ENCODE measurements at regions of chr16 and their contacts with region 1.

Region 1: DNA sequence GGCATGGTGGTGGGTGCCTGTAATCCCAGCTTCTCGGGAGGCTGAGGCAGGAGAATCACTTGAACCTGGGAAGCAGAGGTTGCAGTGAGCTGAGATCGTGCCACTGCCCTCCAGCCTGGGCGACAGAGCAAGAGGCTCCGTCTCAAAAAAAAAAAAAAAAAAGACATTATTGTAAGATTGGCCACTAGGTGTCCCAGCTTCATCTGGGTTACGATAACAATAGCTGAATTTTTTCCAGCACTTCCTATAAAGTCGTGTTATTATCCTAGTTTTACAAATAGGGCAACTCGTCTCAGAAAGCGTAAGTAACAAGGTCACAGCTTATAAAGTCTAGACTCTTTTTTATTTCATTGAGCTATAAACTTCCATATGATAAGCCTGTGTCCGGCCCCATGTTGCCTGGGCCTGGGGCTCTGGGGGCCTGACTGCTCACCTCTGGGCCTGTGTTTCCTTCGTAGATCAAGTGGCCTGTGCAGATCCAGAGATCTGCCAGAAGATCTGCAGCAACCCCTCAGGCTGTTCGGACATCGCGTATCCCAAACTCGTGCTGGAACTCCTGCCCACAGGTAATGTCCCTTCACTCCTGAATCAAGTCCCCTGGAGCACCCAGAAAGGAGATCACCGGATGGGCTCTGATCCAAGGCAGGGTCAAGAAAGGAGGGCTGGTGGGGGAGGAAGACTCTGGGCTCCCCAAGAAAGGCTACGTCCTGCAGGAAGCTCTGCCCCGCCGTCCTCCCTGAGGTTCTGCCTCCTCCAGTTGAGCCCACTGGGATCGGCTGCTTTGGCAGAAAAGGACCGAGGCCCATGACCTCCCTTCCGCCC is 60.6 kb downstream of the SLC5A11 start:
- DNase-seq: peak; percentile 48
- H3K4me3 ChIP-seq: no peak overlapping the region
- H3K27ac ChIP-seq: no peak overlapping the region
- H3K4me1 ChIP-seq: no peaks in the 10 kb centered on the region
- H3K27me3 ChIP-seq: no peaks in the 10 kb centered on the region
- CTCF ChIP-seq: peak; percentile 55

Region 2: GRCh38 chr16:24834459-24835335 is 71.7 kb before region 1 on chr16:
- CTCF ChIA-PET with region 1: interaction called, 12 read pairs
- POLR2A ChIA-PET with region 1: no interaction called
- intact Hi-C with region 1: no loop called
- DNase-seq: peak; percentile 54
- H3K4me3 ChIP-seq: no peak overlapping the region
- H3K27ac ChIP-seq: no peak overlapping the region
- H3K4me1 ChIP-seq: no peaks in the 10 kb centered on the region
- H3K27me3 ChIP-seq: no peaks in the 10 kb centered on the region
- CTCF ChIP-seq: peak; percentile 66

Region 3: DNA sequence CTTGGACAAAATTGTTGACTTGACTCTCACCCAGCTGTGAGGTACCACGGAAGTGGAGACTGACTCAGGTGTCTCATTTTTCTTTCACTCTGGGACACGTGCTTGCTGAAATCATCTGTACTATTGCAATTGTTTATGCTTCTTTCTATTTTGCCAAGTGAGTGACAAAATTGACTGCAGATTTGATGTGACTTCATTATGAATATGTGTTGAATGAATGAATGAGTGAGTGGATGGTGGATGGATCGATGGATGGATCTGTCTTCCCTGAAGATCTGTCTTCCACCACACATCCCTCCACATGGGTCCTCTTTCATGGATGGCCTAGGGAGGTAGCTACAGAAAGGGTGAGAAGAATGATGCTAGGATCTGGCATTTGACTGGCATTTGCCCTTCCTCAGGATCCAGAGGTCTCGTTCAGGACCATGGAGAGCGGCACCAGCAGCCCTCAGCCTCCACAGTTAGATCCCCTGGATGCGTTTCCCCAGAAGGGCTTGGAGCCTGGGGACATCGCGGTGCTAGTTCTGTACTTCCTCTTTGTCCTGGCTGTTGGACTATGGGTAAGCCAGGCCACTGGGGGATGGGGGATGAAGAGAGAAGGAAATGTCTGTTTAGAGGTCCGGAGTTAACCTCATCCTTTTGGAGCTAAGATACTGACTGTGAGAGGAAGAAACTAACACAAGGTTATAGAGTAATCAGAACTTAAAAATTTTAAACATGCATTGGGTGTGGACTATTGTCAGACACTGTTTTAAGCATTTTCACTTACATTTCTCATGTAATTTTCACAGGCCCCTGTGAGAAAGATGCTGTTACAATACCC is 48.0 kb before region 1 on chr16:
- CTCF ChIA-PET with region 1: interaction called, 9 read pairs
- POLR2A ChIA-PET with region 1: interaction called, 20 read pairs
- intact Hi-C with region 1: no loop called
- DNase-seq: peak; percentile 73
- H3K4me3 ChIP-seq: no peak overlapping the region
- H3K27ac ChIP-seq: no peak overlapping the region
- H3K4me1 ChIP-seq: peaks cover 7% of the 10 kb centered on the region
- H3K27me3 ChIP-seq: no peaks in the 10 kb centered on the region
- CTCF ChIP-seq: no peak

Region 4: GRCh38 chr16:24890746-24891145 is 15.7 kb before region 1 on chr16:
- CTCF ChIA-PET with region 1: no interaction called
- POLR2A ChIA-PET with region 1: no interaction called
- intact Hi-C with region 1: no loop called
- DNase-seq: no peak
- H3K4me3 ChIP-seq: no peak overlapping the region
- H3K27ac ChIP-seq: no peak overlapping the region
- H3K4me1 ChIP-seq: no peaks in the 10 kb centered on the region
- H3K27me3 ChIP-seq: no peaks in the 10 kb centered on the region
- CTCF ChIP-seq: no peak